ENCODE measurements at regions of chr11 and their contacts with region 1.

Region 1: GRCh38 chr11:34105079-34105956 is at the start of gene NAT10:
- DNase-seq: peak; percentile 99
- ATAC-seq: peak; percentile 89
- H3K4me3 ChIP-seq: peak within 1 kb of the TSS; percentile 62
- H3K27ac ChIP-seq: peak within 1 kb of the TSS; percentile 78
- H3K4me1 ChIP-seq: peaks cover 2% of the 10 kb centered on the region; the same call in 1 of the 2 replicates
- H3K27me3 ChIP-seq: no peaks in the 10 kb centered on the region
- CTCF ChIP-seq: no peak; the same call in 1 of the 2 replicates
- POLR2A ChIP-seq: peak; percentile 80
- RAD21 ChIP-seq: no peak
- total RNA-seq, gene NAT10: 31.9 and 34.8 TPM in 2 replicates

Region 2: DNA sequence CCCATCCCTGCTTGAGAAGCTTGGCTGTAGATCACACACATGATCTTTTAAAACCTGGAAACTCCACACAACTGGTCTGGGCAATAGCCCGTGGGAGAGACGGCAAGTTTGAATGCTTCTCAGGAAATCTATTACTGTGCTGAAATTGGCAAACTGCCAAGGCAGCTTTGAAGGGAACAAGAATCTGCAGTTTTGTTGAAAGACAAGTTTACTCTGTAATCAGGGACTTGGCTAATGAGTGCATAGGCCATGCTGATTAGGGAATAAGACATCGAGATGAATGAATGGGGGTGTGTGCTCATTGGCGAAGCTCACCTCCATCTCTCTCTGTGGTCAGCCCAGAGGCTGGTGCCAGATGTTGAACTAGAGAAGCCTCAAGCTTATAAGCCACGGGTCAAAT is 629.3 kb before region 1 on chr11:
- CTCF ChIA-PET with region 1: no interaction called
- POLR2A ChIA-PET with region 1: no interaction called
- dilution Hi-C with region 1: no loop called
- in situ Hi-C with region 1: no loop called
- intact Hi-C with region 1: no loop called
- DNase-seq: peak; percentile 57
- ATAC-seq: no peak
- H3K4me3 ChIP-seq: no peak overlapping the region
- H3K27ac ChIP-seq: no peak overlapping the region
- H3K4me1 ChIP-seq: peaks cover 4% of the 10 kb centered on the region; the same call in 1 of the 2 replicates
- H3K27me3 ChIP-seq: no peaks in the 10 kb centered on the region; the same call in 1 of the 2 replicates
- CTCF ChIP-seq: no peak
- POLR2A ChIP-seq: no peak
- RAD21 ChIP-seq: no peak

Region 3: DNA sequence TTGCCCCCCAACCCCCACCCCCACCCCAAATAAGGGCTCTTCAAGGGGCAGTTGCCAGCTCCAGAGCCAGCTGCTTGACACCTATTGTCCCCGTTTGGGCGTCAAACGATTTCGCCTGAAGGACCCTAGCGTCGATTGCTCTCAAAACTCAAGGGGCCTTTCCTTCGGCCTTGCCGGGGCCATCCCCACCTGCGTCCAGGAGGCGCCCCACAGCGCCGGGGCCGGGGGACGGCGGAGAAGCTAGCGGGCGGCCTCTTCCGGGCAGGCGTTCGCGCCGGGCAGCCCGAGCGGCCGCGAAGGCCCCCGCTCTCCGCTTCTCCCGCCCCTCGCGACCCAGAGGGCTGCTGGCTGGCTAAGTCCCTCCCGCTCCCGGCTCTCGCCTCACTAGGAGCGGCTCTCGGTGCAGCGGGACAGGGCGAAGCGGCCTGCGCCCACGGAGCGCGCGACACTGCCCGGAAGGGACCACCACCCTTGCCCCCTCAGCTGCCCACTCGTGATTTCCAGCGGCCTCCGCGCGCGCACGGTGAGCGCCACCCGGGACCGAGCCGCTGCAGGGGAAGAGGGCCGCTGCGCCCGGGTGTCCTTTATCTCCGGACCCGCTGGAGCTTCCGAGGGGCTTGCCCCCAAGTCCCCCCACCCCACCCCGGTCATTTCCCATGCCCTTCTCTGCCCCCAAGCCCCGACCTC is 53.8 kb before region 1 on chr11 and contains the start of gene CAPRIN1:
- CTCF ChIA-PET with region 1: no interaction called
- POLR2A ChIA-PET with region 1: no interaction called
- dilution Hi-C with region 1: no loop called
- in situ Hi-C with region 1: no loop called
- intact Hi-C with region 1: loop called (anchors 1 kb)
- DNase-seq: peak; percentile 83
- ATAC-seq: peak; percentile 87
- H3K4me3 ChIP-seq: peak within 1 kb of the TSS; percentile 67
- H3K27ac ChIP-seq: peak within 1 kb of the TSS; percentile 99
- H3K4me1 ChIP-seq: peaks cover 4% of the 10 kb centered on the region; the same call in 1 of the 2 replicates
- H3K27me3 ChIP-seq: no peaks in the 10 kb centered on the region
- CTCF ChIP-seq: no peak
- POLR2A ChIP-seq: peak; percentile 70
- RAD21 ChIP-seq: no peak
- total RNA-seq, gene CAPRIN1: 253 and 266 TPM in 2 replicates

Region 4: GRCh38 chr11:34068111-34068510 is 37.2 kb before region 1 on chr11:
- CTCF ChIA-PET with region 1: no interaction called
- POLR2A ChIA-PET with region 1: no interaction called
- dilution Hi-C with region 1: no loop called
- in situ Hi-C with region 1: no loop called
- intact Hi-C with region 1: loop called (anchors 5 kb)
- DNase-seq: peak; percentile 64
- ATAC-seq: peak; percentile 66
- H3K4me3 ChIP-seq: no peak overlapping the region
- H3K27ac ChIP-seq: no peak overlapping the region
- H3K4me1 ChIP-seq: 0 out of 2 replicates have a peak, but pooled peaks cover 9% of the 10 kb centered on the region
- H3K27me3 ChIP-seq: no peaks in the 10 kb centered on the region
- CTCF ChIP-seq: no peak
- POLR2A ChIP-seq: no peak
- RAD21 ChIP-seq: no peak

Measured in IMR-90 (cell line).